CD4-positive, alpha-beta T cell (primary cell): ENCODE measurements at regions of chr19 and their contacts with region 1.

Region 1: GRCh38 chr19:48646001-48646721 is at the start of gene CA11:
- DNase-seq: peak; percentile 88 to 96 (median 92)
- ATAC-seq: peak; percentile 80
- H3K4me3 ChIP-seq: peak within 1 kb of the TSS; percentile 71
- H3K4me3 Mint-ChIP-seq: peak within 1 kb of the TSS; percentile 85
- H3K27ac ChIP-seq: peak within 1 kb of the TSS; percentile 78 to 96
- H3K27ac Mint-ChIP-seq: peak within 1 kb of the TSS; percentile 91
- H3K4me1 ChIP-seq: peaks cover 48% of the 10 kb centered on the region
- H3K4me1 Mint-ChIP-seq: peaks cover 54% of the 10 kb centered on the region
- H3K27me3 ChIP-seq: no peaks in the 10 kb centered on the region
- H3K27me3 Mint-ChIP-seq: no peaks in the 10 kb centered on the region
- CTCF ChIP-seq: peak; percentile 84
- total RNA-seq, gene CA11: 11.0 to 12.4 TPM

Region 2: GRCh38 chr19:48603449-48603848 is 42.7 kb before region 1 on chr19:
- CTCF ChIA-PET with region 1: no interaction called
- POLR2A ChIA-PET with region 1: no interaction called
- intact Hi-C with region 1: no loop called
- DNase-seq: peak in 1 of 14 experiments; percentile 22
- ATAC-seq: no peak
- H3K4me3 ChIP-seq: no peak overlapping the region
- H3K4me3 Mint-ChIP-seq: no peak overlapping the region
- H3K27ac ChIP-seq: no peak overlapping the region
- H3K27ac Mint-ChIP-seq: no peak overlapping the region
- H3K4me1 ChIP-seq: no peaks in the 10 kb centered on the region
- H3K4me1 Mint-ChIP-seq: no peaks in the 10 kb centered on the region
- H3K27me3 ChIP-seq: no peaks in the 10 kb centered on the region
- H3K27me3 Mint-ChIP-seq: no peaks in the 10 kb centered on the region
- CTCF ChIP-seq: no peak

Region 3: DNA sequence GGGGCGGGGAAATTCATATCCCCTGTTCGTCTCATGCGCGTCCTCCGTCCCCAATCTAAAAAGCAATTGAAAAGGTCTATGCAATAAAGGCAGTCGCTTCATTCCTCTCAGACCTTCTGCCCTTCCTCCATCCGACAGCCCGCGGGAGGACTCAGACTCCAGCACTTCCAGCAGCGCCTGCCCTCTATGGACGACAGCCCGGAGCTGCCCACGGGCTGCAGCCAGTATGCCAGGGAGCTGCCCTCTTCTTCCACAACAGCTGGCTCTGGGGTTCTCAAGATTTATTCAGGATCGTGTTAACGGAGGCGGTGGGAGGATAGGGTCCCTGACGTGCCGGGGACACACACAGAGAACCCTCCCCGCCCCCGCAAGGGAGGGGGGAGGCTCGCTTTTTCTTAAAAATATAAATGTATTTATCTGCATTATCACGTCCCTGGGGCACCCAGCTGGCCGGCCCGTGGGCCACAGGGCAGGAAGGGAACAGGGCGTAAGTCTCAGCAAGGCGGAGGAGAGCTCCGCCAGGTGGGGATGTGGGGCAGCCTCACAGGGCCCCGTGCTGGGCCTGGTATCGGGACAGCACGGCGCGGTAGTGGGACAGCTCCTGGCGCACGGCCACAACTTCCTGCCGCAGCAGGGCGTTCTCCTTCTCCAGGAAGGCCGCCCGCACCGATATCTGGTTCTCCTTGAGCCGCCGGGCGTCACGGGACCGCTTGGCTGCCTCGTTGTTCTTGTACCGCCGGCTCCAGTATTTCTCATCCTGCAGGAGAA is 15.7 kb before region 1 on chr19:
- CTCF ChIA-PET with region 1: no interaction called
- POLR2A ChIA-PET with region 1: interaction called, 43 read pairs
- intact Hi-C with region 1: no loop called
- DNase-seq: peak in 1 of 14 experiments; percentile 44
- ATAC-seq: no peak
- H3K4me3 ChIP-seq: no peak overlapping the region
- H3K4me3 Mint-ChIP-seq: no peak overlapping the region
- H3K27ac ChIP-seq: no peak overlapping the region
- H3K27ac Mint-ChIP-seq: peak overlapping the region; percentile 73
- H3K4me1 ChIP-seq: peaks cover 50% of the 10 kb centered on the region
- H3K4me1 Mint-ChIP-seq: peaks cover 39% of the 10 kb centered on the region
- H3K27me3 ChIP-seq: no peaks in the 10 kb centered on the region
- H3K27me3 Mint-ChIP-seq: no peaks in the 10 kb centered on the region
- CTCF ChIP-seq: no peak

Region 4: GRCh38 chr19:48674921-48675824 is 29.0 kb after region 1 on chr19:
- CTCF ChIA-PET with region 1: interaction called, 16 read pairs
- POLR2A ChIA-PET with region 1: interaction called, 4 read pairs
- intact Hi-C with region 1: loop called (anchors 1 kb)
- DNase-seq: peak; percentile 62 to 89 (median 68)
- ATAC-seq: peak; percentile 98
- H3K4me3 ChIP-seq: no peak overlapping the region
- H3K4me3 Mint-ChIP-seq: no peak overlapping the region
- H3K27ac ChIP-seq: no peak overlapping the region
- H3K27ac Mint-ChIP-seq: no peak overlapping the region
- H3K4me1 ChIP-seq: peaks cover 9% of the 10 kb centered on the region
- H3K4me1 Mint-ChIP-seq: peaks cover 7% of the 10 kb centered on the region
- H3K27me3 ChIP-seq: no peaks in the 10 kb centered on the region
- H3K27me3 Mint-ChIP-seq: no peaks in the 10 kb centered on the region
- CTCF ChIP-seq: peak; percentile 84

Region 5: GRCh38 chr19:48738557-48739399 is 92.6 kb after region 1 on chr19:
- CTCF ChIA-PET with region 1: interaction called, 19 read pairs
- POLR2A ChIA-PET with region 1: interaction called, 25 read pairs
- intact Hi-C with region 1: loop called (anchors 1 kb)
- DNase-seq: peak; percentile 88 to 97 (median 93)
- ATAC-seq: peak; percentile 92
- H3K4me3 ChIP-seq: no peak overlapping the region
- H3K4me3 Mint-ChIP-seq: peak overlapping the region; percentile 65
- H3K27ac ChIP-seq: no peak overlapping the region
- H3K27ac Mint-ChIP-seq: no peak overlapping the region
- H3K4me1 ChIP-seq: peaks cover 32% of the 10 kb centered on the region
- H3K4me1 Mint-ChIP-seq: peaks cover 20% of the 10 kb centered on the region
- H3K27me3 ChIP-seq: peaks cover 0 to 12% of the 10 kb centered on the region in 2 experiments
- H3K27me3 Mint-ChIP-seq: no peaks in the 10 kb centered on the region
- CTCF ChIP-seq: no peak

Region 6: DNA sequence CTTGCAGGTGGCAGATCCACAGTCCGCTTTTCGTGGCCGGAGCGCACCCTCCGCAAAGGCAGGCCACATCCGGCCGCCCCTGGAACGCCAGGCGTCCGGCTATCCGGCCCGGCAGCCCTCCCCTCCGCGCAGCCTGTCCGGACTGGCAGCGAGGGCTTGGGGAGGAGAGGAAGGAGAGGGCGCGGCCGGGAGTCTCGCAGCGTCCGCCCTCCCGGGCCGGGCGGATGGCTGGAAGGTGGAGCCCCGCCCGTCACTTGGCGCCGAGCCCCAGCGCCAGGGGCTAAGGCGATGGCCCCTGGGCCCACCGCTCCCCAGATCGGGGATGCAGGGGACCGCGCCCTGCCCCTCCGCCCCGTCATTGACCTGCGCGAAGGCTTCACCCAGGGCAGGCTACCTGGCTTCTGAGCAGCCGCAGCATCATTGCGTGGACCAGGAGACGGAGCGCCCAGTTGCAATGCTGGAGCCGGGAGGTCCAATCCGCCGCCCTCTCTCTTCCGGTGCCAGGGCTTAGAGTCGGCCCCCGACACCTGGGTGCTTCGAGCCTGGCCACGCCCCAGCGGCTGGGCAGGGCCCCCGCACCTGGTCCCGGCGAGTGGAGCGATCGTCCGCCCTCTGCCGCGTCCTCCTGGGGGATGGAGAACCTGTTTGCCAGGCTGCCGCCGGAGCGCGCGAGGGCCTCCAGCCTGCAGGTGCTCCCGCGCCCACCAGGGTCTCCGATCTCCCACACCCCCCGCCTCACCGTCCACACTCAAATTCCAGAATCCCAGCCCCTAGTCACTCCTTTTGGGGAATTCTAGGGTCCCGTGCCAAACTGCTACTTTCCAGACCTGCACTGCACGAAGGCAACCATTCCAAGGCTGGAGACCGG is 106.6 kb after region 1 on chr19 and contains the start of gene FUT1:
- CTCF ChIA-PET with region 1: no interaction called
- POLR2A ChIA-PET with region 1: no interaction called
- intact Hi-C with region 1: no loop called
- DNase-seq: peak in 7 of 14 experiments; percentile 10 to 64 (median 40)
- ATAC-seq: peak; percentile 69
- H3K4me3 ChIP-seq: peak within 1 kb of the TSS; percentile 47
- H3K4me3 Mint-ChIP-seq: peak within 1 kb of the TSS; percentile 81
- H3K27ac ChIP-seq: no peak within 1 kb of the TSS
- H3K27ac Mint-ChIP-seq: no peak within 1 kb of the TSS
- H3K4me1 ChIP-seq: peaks cover 24% of the 10 kb centered on the region
- H3K4me1 Mint-ChIP-seq: peaks cover 19% of the 10 kb centered on the region
- H3K27me3 ChIP-seq: peaks cover 20 to 28% of the 10 kb centered on the region in 2 experiments
- H3K27me3 Mint-ChIP-seq: peaks cover 37% of the 10 kb centered on the region
- CTCF ChIP-seq: no peak
- total RNA-seq, gene FUT1: not detected

Region 7: DNA sequence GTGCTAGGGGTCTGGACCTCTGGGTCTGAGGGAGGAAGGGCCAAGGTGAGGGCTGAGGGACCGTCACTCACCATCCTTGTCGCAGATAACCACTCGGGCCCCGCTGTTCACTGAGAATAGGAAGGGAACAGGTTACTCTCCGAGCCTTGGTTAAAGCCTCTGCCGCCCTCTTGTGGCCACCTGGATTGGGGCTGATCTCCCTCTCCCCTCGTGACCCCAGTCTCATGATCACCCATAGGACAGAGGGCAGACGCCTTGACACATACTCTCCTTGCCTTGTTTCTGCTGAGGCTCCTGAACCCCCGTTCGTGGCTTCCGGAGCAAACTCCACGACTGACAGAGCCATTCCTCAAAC is 189.6 kb after region 1 on chr19:
- CTCF ChIA-PET with region 1: interaction called, 3 read pairs
- POLR2A ChIA-PET with region 1: interaction called, 3 read pairs
- intact Hi-C with region 1: loop called (anchors 1 to 5 kb)
- DNase-seq: peak; percentile 88 to 98 (median 94)
- ATAC-seq: peak; percentile 88
- H3K4me3 ChIP-seq: peak overlapping the region; percentile 50
- H3K4me3 Mint-ChIP-seq: peak overlapping the region; percentile 92
- H3K27ac ChIP-seq: no peak overlapping the region
- H3K27ac Mint-ChIP-seq: peak overlapping the region; percentile 73
- H3K4me1 ChIP-seq: peaks cover 23% of the 10 kb centered on the region
- H3K4me1 Mint-ChIP-seq: peaks cover 22% of the 10 kb centered on the region
- H3K27me3 ChIP-seq: peaks cover 0 to 6% of the 10 kb centered on the region in 2 experiments
- H3K27me3 Mint-ChIP-seq: peaks cover 13% of the 10 kb centered on the region
- CTCF ChIP-seq: peak; percentile 80

Region 8: DNA sequence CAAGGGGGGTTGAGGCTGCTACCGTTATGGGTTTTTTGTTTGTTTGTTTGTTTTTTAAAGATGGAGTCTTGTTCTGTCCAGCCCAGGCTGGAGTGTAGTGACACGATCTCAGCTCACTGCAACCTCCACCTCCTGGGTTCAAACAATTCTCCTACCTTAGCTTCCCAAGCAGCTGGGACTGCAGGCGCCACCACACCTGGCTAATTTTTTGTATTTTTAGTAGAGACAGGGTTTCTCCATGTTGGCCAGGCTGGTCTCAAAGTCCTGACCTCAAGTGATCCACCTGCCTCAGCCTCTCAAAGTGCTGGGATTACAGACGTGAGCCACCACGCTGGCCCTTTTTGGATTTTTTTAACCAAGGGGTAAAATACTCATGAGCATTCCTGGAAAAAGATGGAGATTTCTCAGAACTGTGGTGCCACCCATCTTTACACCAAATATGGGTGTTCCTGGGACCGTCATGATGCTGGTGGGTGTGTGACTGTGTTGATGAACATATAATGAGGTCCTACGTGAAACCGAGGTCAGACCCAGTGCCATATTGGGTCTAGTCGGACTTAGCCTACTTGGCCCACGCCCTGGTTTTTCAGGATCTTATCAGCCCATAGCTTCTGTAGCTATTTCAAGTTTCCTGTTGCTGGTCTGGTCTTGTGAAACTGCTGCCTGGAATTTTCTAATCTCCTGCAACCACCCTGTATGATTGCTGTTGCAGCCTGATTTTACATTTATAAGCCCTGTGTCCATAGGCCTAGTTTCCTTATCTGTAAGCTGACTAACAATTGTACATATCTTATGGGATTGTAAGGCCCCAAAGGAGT is 232.3 kb after region 1 on chr19:
- CTCF ChIA-PET with region 1: no interaction called
- POLR2A ChIA-PET with region 1: no interaction called
- intact Hi-C with region 1: no loop called
- DNase-seq: peak in 2 of 14 experiments; percentile 40 to 63
- ATAC-seq: no peak
- H3K4me3 ChIP-seq: no peak overlapping the region
- H3K4me3 Mint-ChIP-seq: no peak overlapping the region
- H3K27ac ChIP-seq: no peak overlapping the region
- H3K27ac Mint-ChIP-seq: peak overlapping the region; percentile 61
- H3K4me1 ChIP-seq: peaks cover 34% of the 10 kb centered on the region
- H3K4me1 Mint-ChIP-seq: peaks cover 34% of the 10 kb centered on the region
- H3K27me3 ChIP-seq: no peaks in the 10 kb centered on the region
- H3K27me3 Mint-ChIP-seq: no peaks in the 10 kb centered on the region
- CTCF ChIP-seq: no peak